ENCODE measurements at regions of chr3 and their contacts with region 1.

Region 1: GRCh38 chr3:147377412-147378367 is 28.7 kb downstream of the ZIC4 start:
- DNase-seq: no peak
- ATAC-seq: no peak
- H3K4me3 ChIP-seq: no peak overlapping the region
- H3K27ac ChIP-seq: no peak overlapping the region
- H3K4me1 ChIP-seq: no peaks in the 10 kb centered on the region
- H3K27me3 ChIP-seq: peaks cover 26 to 100% (median 100%) of the 10 kb centered on the region in 7 donors
- CTCF ChIP-seq: no peak

Region 2: DNA sequence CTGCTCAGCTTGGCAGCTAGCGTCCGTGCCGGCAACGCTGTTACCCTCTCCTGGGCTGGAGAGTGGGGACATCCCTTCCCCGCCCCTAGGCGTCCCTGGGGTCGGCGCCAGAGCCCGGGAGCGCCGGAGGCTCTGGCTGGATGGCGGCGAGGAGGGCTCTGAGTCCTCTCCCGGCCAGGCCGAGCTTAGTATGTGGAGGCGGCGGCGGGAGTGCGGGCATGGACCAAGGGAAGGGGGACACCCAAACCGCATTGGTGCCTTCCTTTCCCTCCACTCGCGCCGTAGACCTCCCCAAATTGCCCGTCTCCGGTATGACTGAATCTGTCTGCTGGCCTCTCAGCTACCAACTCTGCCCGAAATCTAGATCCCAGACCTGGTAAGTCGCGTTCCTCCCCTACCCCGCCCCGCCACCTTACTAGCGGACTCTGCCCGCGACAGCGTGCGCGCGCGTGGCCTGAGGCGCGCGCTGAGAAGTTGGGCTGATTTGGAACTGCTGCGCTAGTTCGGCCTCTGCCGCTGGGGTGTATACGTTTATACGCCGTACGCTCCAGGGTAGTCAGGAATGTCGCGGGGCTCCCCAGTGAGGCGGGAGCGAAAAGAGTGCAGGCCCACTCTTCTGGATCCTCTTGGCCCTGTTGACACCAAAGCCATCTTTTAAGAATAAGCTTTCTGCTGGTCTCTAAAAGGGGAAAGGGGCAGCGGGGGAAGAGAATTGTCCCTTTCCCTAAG is 43.7 kb after region 1 on chr3:
- intact Hi-C with region 1: loop called in 1 of 10 experiments (anchors 10 kb)
- DNase-seq: no peak
- ATAC-seq: peak in 1 of 8 donors; percentile 18
- H3K4me3 ChIP-seq: peak overlapping the region in 1 of 10 donors; percentile 14
- H3K27ac ChIP-seq: no peak overlapping the region
- H3K4me1 ChIP-seq: peaks cover 4 to 26% (median 9%) of the 10 kb centered on the region in 9 donors
- H3K27me3 ChIP-seq: peaks cover 52 to 100% (median 100%) of the 10 kb centered on the region in 7 donors
- CTCF ChIP-seq: no peak